Activated CD4-positive, alpha-beta T cell treated with anti-CD3 and anti-CD28 coated beads for 36 hours (primary cell): ENCODE measurements at regions of chr2 and their contacts with region 1.

Region 1: GRCh38 chr2:68909793-68910674 is 38.8 kb upstream of the BMP10 start:
- DNase-seq: peak; percentile 88
- ATAC-seq: peak; percentile 20
- H3K4me3 Mint-ChIP-seq: no peak overlapping the region
- H3K27ac Mint-ChIP-seq: peak overlapping the region; percentile 69
- H3K4me1 Mint-ChIP-seq: peaks cover 36% of the 10 kb centered on the region
- H3K27me3 Mint-ChIP-seq: no peaks in the 10 kb centered on the region

Region 2: GRCh38 chr2:68653538-68653982 is 256.5 kb before region 1 on chr2:
- CTCF ChIA-PET with region 1: interaction called, 13 read pairs
- POLR2A ChIA-PET with region 1: no interaction called
- intact Hi-C with region 1: loop called in 1 of 2 experiments (anchors 2 kb)
- DNase-seq: peak; percentile 73
- ATAC-seq: peak; percentile 90
- H3K4me3 Mint-ChIP-seq: peak overlapping the region; percentile 0
- H3K27ac Mint-ChIP-seq: peak overlapping the region; percentile 68
- H3K4me1 Mint-ChIP-seq: peaks cover 43% of the 10 kb centered on the region
- H3K27me3 Mint-ChIP-seq: peaks cover 15% of the 10 kb centered on the region

Region 3: GRCh38 chr2:68696554-68696953 is 213.5 kb before region 1 on chr2:
- CTCF ChIA-PET with region 1: interaction called, 12 read pairs
- POLR2A ChIA-PET with region 1: no interaction called
- intact Hi-C with region 1: no loop called
- DNase-seq: no peak
- ATAC-seq: no peak
- H3K4me3 Mint-ChIP-seq: no peak overlapping the region
- H3K27ac Mint-ChIP-seq: no peak overlapping the region
- H3K4me1 Mint-ChIP-seq: no peaks in the 10 kb centered on the region
- H3K27me3 Mint-ChIP-seq: peaks cover 3% of the 10 kb centered on the region

Region 4: DNA sequence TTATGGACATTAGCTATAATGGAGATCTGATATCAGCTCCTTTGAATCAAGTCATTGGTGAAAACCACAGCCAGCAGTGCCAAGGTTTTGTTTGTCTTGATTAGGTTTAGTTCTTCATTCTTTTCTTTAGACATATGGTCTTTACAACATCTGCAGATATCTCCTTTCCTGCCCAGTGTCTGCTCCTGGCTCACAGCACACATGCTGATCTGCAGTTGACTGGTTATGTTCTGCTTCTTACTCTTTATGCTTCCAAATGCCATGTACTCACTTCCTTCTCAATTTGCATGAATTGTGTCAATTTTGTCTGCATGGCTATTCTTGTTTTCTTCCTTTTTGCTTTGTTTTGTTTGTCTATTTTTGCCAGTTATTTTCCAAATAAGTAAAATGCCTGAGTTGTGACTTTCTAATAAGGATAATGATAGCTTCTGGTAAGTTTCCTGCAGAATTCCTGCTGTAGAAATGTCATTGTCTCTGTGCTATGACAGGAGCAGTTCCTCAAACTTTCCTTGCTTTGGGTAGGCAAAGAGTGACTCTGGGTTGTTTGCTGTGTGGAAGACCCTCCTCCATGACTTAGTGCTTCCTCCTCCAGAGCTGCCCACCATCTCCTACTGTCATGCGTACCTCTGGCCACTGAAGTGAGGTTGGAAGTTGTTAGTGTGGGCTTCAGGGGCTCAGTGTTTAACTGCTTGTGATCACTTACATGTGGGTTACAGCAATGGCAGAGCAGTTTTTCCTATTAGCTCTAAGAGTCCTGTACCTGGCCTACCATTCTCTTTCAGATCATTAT is 167.2 kb before region 1 on chr2:
- CTCF ChIA-PET with region 1: interaction called, 5 read pairs
- POLR2A ChIA-PET with region 1: interaction called, 3 read pairs
- intact Hi-C with region 1: loop called in 1 of 2 experiments (anchors 2 kb)
- DNase-seq: no peak
- ATAC-seq: no peak
- H3K4me3 Mint-ChIP-seq: peak overlapping the region; percentile 33
- H3K27ac Mint-ChIP-seq: peak overlapping the region; percentile 80
- H3K4me1 Mint-ChIP-seq: peaks cover 97% of the 10 kb centered on the region
- H3K27me3 Mint-ChIP-seq: no peaks in the 10 kb centered on the region

Region 5: GRCh38 chr2:68751397-68752339 is 158.4 kb before region 1 on chr2:
- CTCF ChIA-PET with region 1: interaction called, 32 read pairs
- POLR2A ChIA-PET with region 1: interaction called, 3 read pairs
- intact Hi-C with region 1: loop called (anchors 1 kb)
- DNase-seq: peak; percentile 96
- ATAC-seq: peak; percentile 93
- H3K4me3 Mint-ChIP-seq: peak overlapping the region; percentile 20
- H3K27ac Mint-ChIP-seq: peak overlapping the region; percentile 84
- H3K4me1 Mint-ChIP-seq: peaks cover 87% of the 10 kb centered on the region
- H3K27me3 Mint-ChIP-seq: no peaks in the 10 kb centered on the region

Region 6: GRCh38 chr2:68837164-68837860 is 72.7 kb before region 1 on chr2:
- CTCF ChIA-PET with region 1: interaction called, 39 read pairs
- POLR2A ChIA-PET with region 1: no interaction called
- intact Hi-C with region 1: loop called (anchors 1 to 2 kb)
- DNase-seq: peak; percentile 84
- ATAC-seq: peak; percentile 45
- H3K4me3 Mint-ChIP-seq: no peak overlapping the region
- H3K27ac Mint-ChIP-seq: peak overlapping the region; percentile 79
- H3K4me1 Mint-ChIP-seq: peaks cover 39% of the 10 kb centered on the region
- H3K27me3 Mint-ChIP-seq: no peaks in the 10 kb centered on the region